Panc1 (cell line): ENCODE measurements at regions of chr2 and their contacts with region 1.

Region 1: GRCh38 chr2:46915811-46916630 is 415 bp upstream of the MCFD2 start:
- DNase-seq: peak; percentile 81
- ATAC-seq: peak; percentile 97
- H3K4me3 ChIP-seq: peak overlapping the region; percentile 74 to 77
- H3K27ac ChIP-seq: peak overlapping the region; percentile 90
- H3K4me1 ChIP-seq: peaks cover 22% of the 10 kb centered on the region
- H3K27me3 ChIP-seq: no peaks in the 10 kb centered on the region
- CTCF ChIP-seq: no peak

Region 2: GRCh38 chr2:46850777-46851176 is 65.2 kb before region 1 on chr2:
- CTCF ChIA-PET with region 1: no interaction called
- POLR2A ChIA-PET with region 1: interaction called, 14 read pairs
- in situ Hi-C with region 1: no loop called
- intact Hi-C with region 1: no loop called
- DNase-seq: no peak
- ATAC-seq: peak; percentile 83
- H3K4me3 ChIP-seq: no peak overlapping the region
- H3K27ac ChIP-seq: peak overlapping the region; percentile 14
- H3K4me1 ChIP-seq: peaks cover 56% of the 10 kb centered on the region
- H3K27me3 ChIP-seq: no peaks in the 10 kb centered on the region
- CTCF ChIP-seq: no peak

Region 3: GRCh38 chr2:47002480-47003381 is 86.7 kb after region 1 on chr2:
- CTCF ChIA-PET with region 1: no interaction called
- POLR2A ChIA-PET with region 1: no interaction called
- in situ Hi-C with region 1: no loop called
- intact Hi-C with region 1: no loop called
- DNase-seq: no peak
- ATAC-seq: no peak
- H3K4me3 ChIP-seq: no peak overlapping the region
- H3K27ac ChIP-seq: no peak overlapping the region
- H3K4me1 ChIP-seq: no peaks in the 10 kb centered on the region
- H3K27me3 ChIP-seq: no peaks in the 10 kb centered on the region
- CTCF ChIP-seq: no peak

Region 4: GRCh38 chr2:47043142-47043890 is 127.3 kb after region 1 on chr2:
- CTCF ChIA-PET with region 1: no interaction called
- POLR2A ChIA-PET with region 1: interaction called, 22 read pairs
- in situ Hi-C with region 1: no loop called
- intact Hi-C with region 1: no loop called
- DNase-seq: peak; percentile 92
- ATAC-seq: peak; percentile 93
- H3K4me3 ChIP-seq: peak overlapping the region in 1 of 2 experiments; percentile 25; a peak in 2 of 4 replicates
- H3K27ac ChIP-seq: peak overlapping the region; percentile 87
- H3K4me1 ChIP-seq: peaks cover 37% of the 10 kb centered on the region
- H3K27me3 ChIP-seq: no peaks in the 10 kb centered on the region
- CTCF ChIP-seq: no peak

Region 5: GRCh38 chr2:47169784-47170183 is 253.8 kb after region 1 on chr2:
- CTCF ChIA-PET with region 1: no interaction called
- POLR2A ChIA-PET with region 1: interaction called, 13 read pairs
- in situ Hi-C with region 1: no loop called
- intact Hi-C with region 1: no loop called
- DNase-seq: no peak
- ATAC-seq: no peak
- H3K4me3 ChIP-seq: peak overlapping the region in 1 of 2 experiments; percentile 69; a peak in 1 of 4 replicates
- H3K27ac ChIP-seq: peak overlapping the region; percentile 77
- H3K4me1 ChIP-seq: peaks cover 59% of the 10 kb centered on the region
- H3K27me3 ChIP-seq: no peaks in the 10 kb centered on the region
- CTCF ChIP-seq: no peak

Region 6: GRCh38 chr2:47323009-47323821 is 407.2 kb after region 1 on chr2:
- CTCF ChIA-PET with region 1: interaction called, 4 read pairs
- POLR2A ChIA-PET with region 1: no interaction called
- in situ Hi-C with region 1: no loop called
- intact Hi-C with region 1: loop called (anchors 2 kb)
- DNase-seq: peak; percentile 67
- ATAC-seq: peak; percentile 96
- H3K4me3 ChIP-seq: no peak overlapping the region
- H3K27ac ChIP-seq: no peak overlapping the region
- H3K4me1 ChIP-seq: peaks cover 15% of the 10 kb centered on the region; the same call in 1 of the 2 replicates
- H3K27me3 ChIP-seq: no peaks in the 10 kb centered on the region
- CTCF ChIP-seq: peak; percentile 96